Heart right ventricle (tissue), 16 donors: ENCODE measurements at regions of chr10 and their contacts with region 1.

Region 1: GRCh38 chr10:129483430-129484010 is 16.5 kb downstream of the MGMT start:
- DNase-seq: no peak
- ATAC-seq: no peak
- H3K4me3 ChIP-seq: no peak overlapping the region
- H3K27ac ChIP-seq: no peak overlapping the region
- H3K4me1 ChIP-seq: peaks cover 0 to 8% (median 0%) of the 10 kb centered on the region in 9 donors
- H3K27me3 ChIP-seq: no peaks in the 10 kb centered on the region
- CTCF ChIP-seq: no peak

Region 2: GRCh38 chr10:129057856-129058663 is 425.5 kb before region 1 on chr10:
- intact Hi-C with region 1: loop called in 1 of 10 experiments (anchors 10 kb)
- DNase-seq: no peak
- ATAC-seq: peak in 1 of 8 donors; percentile 9
- H3K4me3 ChIP-seq: no peak overlapping the region
- H3K27ac ChIP-seq: no peak overlapping the region
- H3K4me1 ChIP-seq: peaks cover 0 to 10% (median 0%) of the 10 kb centered on the region in 9 donors
- H3K27me3 ChIP-seq: peaks cover 0 to 4% (median 0%) of the 10 kb centered on the region in 7 donors
- CTCF ChIP-seq: no peak